Calu3 (cell line): ENCODE measurements at regions of chr2 and their contacts with region 1.

Region 1: DNA sequence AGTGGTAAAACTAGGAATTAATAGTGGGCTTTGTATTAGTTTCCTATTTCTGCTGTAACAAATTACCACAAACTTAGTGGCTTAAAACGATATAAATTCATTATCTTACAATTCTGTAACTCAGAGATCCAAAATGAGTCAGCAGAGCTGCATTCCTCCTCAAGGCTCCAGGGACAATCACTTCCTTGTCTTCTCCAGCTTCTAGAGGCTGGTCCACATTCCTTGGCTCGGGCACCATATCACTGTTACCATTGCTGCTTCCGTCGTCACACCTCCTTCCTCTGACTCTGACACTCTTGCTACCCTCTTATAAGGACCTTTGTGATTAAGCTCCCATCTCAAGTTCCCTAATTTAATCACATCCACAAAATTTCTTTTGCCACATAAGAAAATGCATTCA is 567.8 kb upstream of the KLHL29 start:
- DNase-seq: peak; percentile 59
- H3K4me3 Mint-ChIP-seq: no peak overlapping the region
- H3K27ac Mint-ChIP-seq: peak overlapping the region; percentile 77
- H3K4me1 Mint-ChIP-seq: peaks cover 29% of the 10 kb centered on the region
- H3K27me3 Mint-ChIP-seq: no peaks in the 10 kb centered on the region
- CTCF ChIP-seq: no peak

Region 2: GRCh38 chr2:22991844-22992243 is 174.6 kb after region 1 on chr2:
- CTCF ChIA-PET with region 1: no interaction called
- intact Hi-C with region 1: loop called (anchors 10 kb)
- DNase-seq: no peak
- H3K4me3 Mint-ChIP-seq: no peak overlapping the region
- H3K27ac Mint-ChIP-seq: no peak overlapping the region
- H3K4me1 Mint-ChIP-seq: no peaks in the 10 kb centered on the region
- H3K27me3 Mint-ChIP-seq: no peaks in the 10 kb centered on the region
- CTCF ChIP-seq: no peak

Region 3: GRCh38 chr2:23069923-23070322 is 252.7 kb after region 1 on chr2:
- CTCF ChIA-PET with region 1: no interaction called
- intact Hi-C with region 1: no loop called
- DNase-seq: no peak
- H3K4me3 Mint-ChIP-seq: no peak overlapping the region
- H3K27ac Mint-ChIP-seq: no peak overlapping the region
- H3K4me1 Mint-ChIP-seq: no peaks in the 10 kb centered on the region
- H3K27me3 Mint-ChIP-seq: peaks cover 13% of the 10 kb centered on the region
- CTCF ChIP-seq: no peak